ENCODE measurements at regions of chr14 and their contacts with region 1.

Region 1: DNA sequence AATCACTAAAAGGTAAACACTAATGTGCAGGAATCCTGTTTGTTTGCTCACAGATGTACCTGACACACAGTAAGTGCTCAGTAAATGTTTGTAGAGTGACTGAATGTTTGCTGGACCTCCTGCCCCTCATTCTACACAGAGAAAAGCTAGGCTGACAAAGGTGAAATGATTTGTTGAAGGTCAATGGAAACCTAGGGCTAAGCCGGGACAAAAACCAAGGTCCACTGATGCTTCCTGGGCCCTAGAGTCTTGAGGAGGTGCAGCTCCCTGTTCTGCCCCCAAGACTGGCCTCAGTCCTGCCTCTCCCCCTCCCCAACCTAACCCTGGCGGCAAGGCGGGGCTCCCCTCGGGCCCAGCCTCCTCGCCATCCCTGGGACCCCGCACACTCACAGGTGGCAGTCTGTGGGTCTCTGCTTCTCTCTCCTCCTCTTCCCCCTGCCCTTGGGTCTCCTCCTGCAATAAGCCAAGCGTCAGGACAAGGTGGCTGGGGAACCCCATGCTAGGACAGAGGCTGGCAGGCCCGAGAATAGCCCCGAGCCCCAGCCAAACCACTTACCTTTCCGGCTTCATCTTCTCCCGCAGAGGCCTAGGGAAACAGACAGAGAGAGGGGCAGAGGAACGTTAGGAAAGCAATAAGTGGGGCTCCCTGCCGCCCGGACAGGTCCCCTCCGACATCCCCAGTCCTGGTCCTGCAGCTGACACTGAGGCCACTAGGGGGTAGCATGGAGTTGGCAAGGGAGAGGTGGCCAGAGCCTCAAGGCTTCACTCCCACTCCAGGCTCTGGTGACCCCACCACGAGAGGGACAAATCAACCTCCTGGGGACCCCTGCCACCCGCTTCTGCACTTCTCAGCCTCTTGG is 9.3 kb downstream of the PGF start:
- DNase-seq: peak; percentile 79
- H3K4me3 Mint-ChIP-seq: peak overlapping the region; percentile 2
- H3K27ac Mint-ChIP-seq: no peak overlapping the region
- H3K4me1 Mint-ChIP-seq: peaks cover 33% of the 10 kb centered on the region
- H3K27me3 Mint-ChIP-seq: no peaks in the 10 kb centered on the region

Region 2: GRCh38 chr14:73851644-73852382 is 1094.2 kb before region 1 on chr14 and contains the start of gene PTGR2:
- CTCF ChIA-PET with region 1: no interaction called
- POLR2A ChIA-PET with region 1: no interaction called
- DNase-seq: peak; percentile 88
- H3K4me3 Mint-ChIP-seq: peak within 1 kb of the TSS; percentile 98
- H3K27ac Mint-ChIP-seq: peak within 1 kb of the TSS; percentile 95
- H3K4me1 Mint-ChIP-seq: peaks cover 22% of the 10 kb centered on the region
- H3K27me3 Mint-ChIP-seq: peaks cover 5% of the 10 kb centered on the region
- total RNA-seq, gene PTGR2: 2.3 to 2.8 TPM

Region 3: DNA sequence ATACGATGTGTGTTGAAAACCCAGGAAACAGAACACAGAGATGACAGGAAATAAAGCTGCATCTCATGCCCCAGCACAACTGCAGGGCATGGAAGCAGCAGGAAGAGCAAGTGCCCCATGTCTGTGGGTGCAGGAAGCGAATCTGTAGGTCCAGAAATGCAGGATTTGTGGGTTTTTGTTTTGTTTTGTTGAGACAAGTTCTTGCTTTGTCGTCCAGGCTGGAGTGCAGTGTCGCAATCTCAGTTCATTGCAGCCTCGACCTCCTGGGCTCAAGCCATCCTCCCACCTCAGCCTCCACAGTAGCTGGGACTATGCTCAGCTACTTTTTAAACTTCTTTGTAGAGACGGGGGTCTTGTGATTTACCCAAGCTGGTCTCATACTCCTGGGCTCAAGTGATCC is 16.8 kb before region 1 on chr14:
- CTCF ChIA-PET with region 1: interaction called, 23 read pairs
- POLR2A ChIA-PET with region 1: interaction called, 8 read pairs
- DNase-seq: no peak
- H3K4me3 Mint-ChIP-seq: no peak overlapping the region
- H3K27ac Mint-ChIP-seq: no peak overlapping the region
- H3K4me1 Mint-ChIP-seq: peaks cover 16% of the 10 kb centered on the region
- H3K27me3 Mint-ChIP-seq: peaks cover 33% of the 10 kb centered on the region

Region 4: GRCh38 chr14:74968811-74969210 is 22.8 kb after region 1 on chr14:
- CTCF ChIA-PET with region 1: interaction called, 10 read pairs
- POLR2A ChIA-PET with region 1: interaction called, 3 read pairs
- DNase-seq: no peak
- H3K4me3 Mint-ChIP-seq: no peak overlapping the region
- H3K27ac Mint-ChIP-seq: no peak overlapping the region
- H3K4me1 Mint-ChIP-seq: peaks cover 4% of the 10 kb centered on the region
- H3K27me3 Mint-ChIP-seq: peaks cover 17% of the 10 kb centered on the region

Region 5: GRCh38 chr14:74988131-74988530 is 42.1 kb after region 1 on chr14:
- CTCF ChIA-PET with region 1: no interaction called
- POLR2A ChIA-PET with region 1: no interaction called
- DNase-seq: no peak
- H3K4me3 Mint-ChIP-seq: no peak overlapping the region
- H3K27ac Mint-ChIP-seq: no peak overlapping the region
- H3K4me1 Mint-ChIP-seq: no peaks in the 10 kb centered on the region
- H3K27me3 Mint-ChIP-seq: peaks cover 4% of the 10 kb centered on the region

Region 6: DNA sequence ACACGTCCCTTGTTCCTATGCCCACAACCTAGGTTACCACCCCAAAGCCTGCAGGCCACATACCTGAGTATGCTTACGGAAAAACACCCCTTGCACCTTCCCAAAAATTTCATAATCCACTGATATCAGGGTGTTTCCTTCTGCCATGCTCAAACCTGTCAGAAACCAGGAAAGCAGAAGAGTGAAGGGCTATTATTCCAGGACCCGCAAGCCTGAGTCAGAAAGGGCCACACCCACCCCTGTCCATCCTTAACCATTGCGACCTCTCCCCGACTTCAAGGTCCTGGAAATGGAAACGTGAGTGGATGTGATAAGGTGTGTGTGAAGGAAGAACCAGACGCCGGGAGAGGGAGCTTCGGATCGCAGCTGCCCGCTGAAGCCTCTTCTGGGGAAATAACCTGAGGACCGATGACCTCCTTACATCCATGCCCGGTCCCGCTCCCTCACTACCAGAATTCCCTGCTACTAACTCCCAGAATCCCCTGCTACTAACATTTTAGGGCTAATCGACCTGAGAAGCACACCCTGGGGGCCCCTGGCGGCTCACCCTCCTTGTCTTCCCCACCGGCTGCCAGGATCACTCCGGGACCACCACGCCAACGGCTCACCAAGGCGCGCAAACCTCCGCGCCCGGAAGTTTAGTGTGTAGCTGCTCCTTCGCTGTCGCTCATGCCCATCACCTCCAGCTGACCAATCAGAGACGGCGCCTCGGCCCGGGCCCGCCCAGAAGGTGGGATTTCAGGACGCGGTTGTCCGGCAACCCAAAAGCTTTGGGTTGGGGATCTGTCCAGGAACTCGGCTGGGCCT is 117.6 kb after region 1 on chr14 and contains the start of gene ACYP1:
- CTCF ChIA-PET with region 1: interaction called, 6 read pairs
- POLR2A ChIA-PET with region 1: interaction called, 17 read pairs
- DNase-seq: peak; percentile 93
- H3K4me3 Mint-ChIP-seq: peak within 1 kb of the TSS; percentile 99
- H3K27ac Mint-ChIP-seq: peak within 1 kb of the TSS; percentile 92
- H3K4me1 Mint-ChIP-seq: peaks cover 42% of the 10 kb centered on the region
- H3K27me3 Mint-ChIP-seq: no peaks in the 10 kb centered on the region
- total RNA-seq, gene ACYP1: 52.7 to 53.8 TPM

Region 7: DNA sequence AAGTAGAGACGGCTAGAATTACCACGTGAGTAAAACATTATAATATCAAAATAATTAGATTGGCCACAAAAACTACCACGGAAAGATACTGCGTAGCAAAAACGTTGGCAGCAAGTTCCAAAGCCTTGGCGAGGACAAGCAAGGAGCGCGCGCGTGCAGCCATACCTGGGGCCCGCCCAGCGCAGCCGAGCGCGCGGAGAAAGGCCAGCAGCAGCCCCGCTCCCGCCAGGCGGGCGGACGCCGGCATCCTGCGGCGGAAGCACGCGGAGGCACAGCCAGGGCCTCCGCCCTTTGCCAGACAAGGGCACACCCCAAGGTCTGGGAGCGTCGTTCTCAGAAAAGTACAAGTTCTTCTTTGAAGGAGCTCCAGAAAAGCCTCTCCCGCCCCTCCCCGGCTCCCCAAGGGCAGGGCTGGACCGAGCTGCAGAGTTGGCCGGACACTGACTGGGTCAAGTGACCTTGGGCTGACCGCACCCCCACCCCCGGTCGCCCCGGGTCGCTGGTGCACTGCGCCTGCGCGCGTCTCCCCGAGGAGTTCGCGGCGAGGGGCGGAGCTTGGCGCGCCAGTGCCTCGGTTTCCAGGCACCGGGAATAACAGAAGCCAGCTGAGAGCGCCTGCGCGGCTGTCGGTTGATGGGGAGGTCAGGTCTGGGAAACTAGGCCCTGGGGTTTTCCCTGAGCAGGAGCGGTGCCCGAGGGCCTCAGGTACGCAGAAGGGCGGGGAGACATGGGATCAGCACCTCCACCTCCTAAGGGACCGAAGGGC is 123.2 kb after region 1 on chr14 and contains the start of gene ZC2HC1C:
- CTCF ChIA-PET with region 1: interaction called, 6 read pairs
- POLR2A ChIA-PET with region 1: interaction called, 17 read pairs
- DNase-seq: peak; percentile 73
- H3K4me3 Mint-ChIP-seq: peak within 1 kb of the TSS; percentile 22
- H3K27ac Mint-ChIP-seq: no peak within 1 kb of the TSS
- H3K4me1 Mint-ChIP-seq: peaks cover 17% of the 10 kb centered on the region
- H3K27me3 Mint-ChIP-seq: no peaks in the 10 kb centered on the region
- total RNA-seq, gene ZC2HC1C: 2.0 to 2.4 TPM

Measured in activated CD4-positive, alpha-beta memory T cell treated with anti-CD3 and anti-CD28 coated beads, Interleukin-2, amount 10 ng/mL, durations not matched to agents 7 days and 5 days (primary cell).